ENCODE measurements at regions of chr15 and their contacts with region 1.

Region 1: DNA sequence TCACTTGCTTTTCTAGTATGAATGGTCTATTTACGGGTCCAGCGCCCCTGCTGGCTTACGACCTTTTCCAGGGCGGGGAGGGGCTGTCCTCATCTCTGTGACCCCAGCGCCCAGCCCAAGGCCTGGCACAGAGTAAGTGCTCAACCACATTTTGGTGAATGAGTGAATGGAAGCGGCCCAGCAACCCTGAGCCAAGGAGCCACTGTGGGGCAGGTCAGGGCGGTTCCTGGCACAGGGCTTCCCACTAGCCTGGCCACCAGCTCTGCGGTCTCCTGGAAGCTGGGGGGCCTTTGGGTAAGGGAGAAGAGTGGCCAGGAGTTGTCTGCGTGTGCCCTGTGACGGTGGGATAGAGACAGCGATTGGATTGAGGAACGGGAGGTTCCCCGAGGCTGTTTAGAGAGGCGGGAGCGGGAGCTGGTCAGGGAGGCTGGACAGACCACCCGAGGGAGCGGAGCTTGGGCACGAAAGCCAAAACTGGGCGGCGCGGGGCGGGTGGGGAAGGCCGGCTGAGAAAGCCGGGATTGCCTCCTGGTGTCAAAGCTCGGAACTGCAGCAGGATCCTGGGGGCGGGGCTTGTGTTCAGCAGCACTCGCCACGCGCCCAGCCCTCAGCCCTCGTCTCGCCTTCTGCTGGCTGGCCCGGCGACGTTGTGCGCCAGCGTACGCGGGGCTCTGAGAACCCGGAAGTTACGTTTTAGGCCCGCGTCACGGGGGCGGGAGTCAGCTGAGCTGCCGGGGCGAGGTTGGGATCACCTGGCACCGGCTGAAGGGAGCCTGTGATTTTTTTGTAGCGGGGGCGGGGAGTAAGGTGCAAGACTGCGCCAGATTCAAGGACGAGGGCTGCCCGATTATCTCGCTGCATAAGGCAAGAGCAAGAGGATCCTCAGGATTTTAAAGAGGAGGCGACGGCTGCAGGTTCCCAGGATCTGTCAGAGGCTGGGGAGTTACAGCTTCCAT is at the start of gene VPS18:
- DNase-seq: peak; percentile 99
- H3K4me3 Mint-ChIP-seq: peak within 1 kb of the TSS; percentile 97
- H3K27ac Mint-ChIP-seq: peak within 1 kb of the TSS; percentile 93
- H3K4me1 Mint-ChIP-seq: peaks cover 36% of the 10 kb centered on the region
- H3K27me3 Mint-ChIP-seq: peaks cover 4% of the 10 kb centered on the region
- total RNA-seq, gene VPS18: 16.3 to 17.1 TPM

Region 2: GRCh38 chr15:40684381-40684780 is 209.6 kb before region 1 on chr15:
- CTCF ChIA-PET with region 1: interaction called, 14 read pairs
- POLR2A ChIA-PET with region 1: no interaction called
- DNase-seq: no peak
- H3K4me3 Mint-ChIP-seq: no peak overlapping the region
- H3K27ac Mint-ChIP-seq: no peak overlapping the region
- H3K4me1 Mint-ChIP-seq: peaks cover 2% of the 10 kb centered on the region
- H3K27me3 Mint-ChIP-seq: peaks cover 2% of the 10 kb centered on the region

Region 3: DNA sequence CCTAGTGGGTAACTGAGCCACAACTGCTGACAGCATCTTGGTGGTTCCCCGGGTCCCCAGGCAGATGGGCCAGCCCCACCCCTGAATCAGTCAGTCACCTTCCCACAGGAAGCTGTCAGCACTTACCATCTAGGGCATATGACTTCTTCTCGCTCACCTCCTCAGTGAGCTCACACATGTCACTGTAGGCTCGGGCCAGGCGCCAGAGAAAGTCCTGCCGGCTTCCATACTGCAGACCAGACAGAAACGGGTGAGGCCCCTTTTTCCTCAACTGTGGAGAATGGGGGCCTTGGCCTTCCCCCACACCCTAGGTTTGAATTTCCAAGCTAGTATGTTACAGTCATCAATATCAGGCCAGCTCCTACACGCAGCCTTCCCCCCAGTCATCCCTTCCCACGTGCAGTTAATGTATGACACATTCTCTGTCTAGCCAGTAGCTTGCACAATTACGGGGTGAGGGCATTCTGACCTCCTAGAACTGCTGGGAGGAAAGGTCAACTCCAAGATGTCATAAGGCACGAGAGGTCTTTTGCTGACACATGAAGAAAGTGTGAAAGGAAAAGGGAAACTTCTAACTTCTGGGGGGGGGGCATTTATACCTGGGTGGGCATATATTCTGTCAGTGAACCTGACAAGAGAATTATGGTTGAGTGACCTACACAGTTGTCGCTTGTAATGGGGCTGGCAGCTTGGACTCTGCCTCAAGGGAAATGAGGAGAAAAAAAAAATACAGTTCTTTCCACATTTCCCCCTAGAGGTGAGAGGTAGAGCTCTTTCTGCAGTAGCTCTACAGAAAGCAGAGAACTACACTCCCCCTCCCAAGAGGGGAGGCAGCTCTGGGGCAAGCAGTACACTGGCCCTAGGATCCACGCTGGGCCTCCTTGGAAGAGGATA is 149.8 kb before region 1 on chr15:
- CTCF ChIA-PET with region 1: interaction called, 10 read pairs
- POLR2A ChIA-PET with region 1: no interaction called
- DNase-seq: peak; percentile 85
- H3K4me3 Mint-ChIP-seq: peak overlapping the region; percentile 53
- H3K27ac Mint-ChIP-seq: peak overlapping the region; percentile 95
- H3K4me1 Mint-ChIP-seq: peaks cover 48% of the 10 kb centered on the region
- H3K27me3 Mint-ChIP-seq: no peaks in the 10 kb centered on the region

Region 4: GRCh38 chr15:40807028-40807887 is 86.8 kb before region 1 on chr15 and contains the starts of genes DNAJC17 and ZFYVE19:
- CTCF ChIA-PET with region 1: interaction called, 16 read pairs
- POLR2A ChIA-PET with region 1: interaction called, 6 read pairs
- DNase-seq: peak; percentile 96
- H3K4me3 Mint-ChIP-seq: peak within 1 kb of the TSS; percentile 91
- H3K27ac Mint-ChIP-seq: peak within 1 kb of the TSS; percentile 95
- H3K4me1 Mint-ChIP-seq: peaks cover 25% of the 10 kb centered on the region
- H3K27me3 Mint-ChIP-seq: no peaks in the 10 kb centered on the region
- total RNA-seq, gene DNAJC17: 35.8 to 37.8 TPM
- total RNA-seq, gene ZFYVE19: 27.2 to 29.8 TPM

Region 5: DNA sequence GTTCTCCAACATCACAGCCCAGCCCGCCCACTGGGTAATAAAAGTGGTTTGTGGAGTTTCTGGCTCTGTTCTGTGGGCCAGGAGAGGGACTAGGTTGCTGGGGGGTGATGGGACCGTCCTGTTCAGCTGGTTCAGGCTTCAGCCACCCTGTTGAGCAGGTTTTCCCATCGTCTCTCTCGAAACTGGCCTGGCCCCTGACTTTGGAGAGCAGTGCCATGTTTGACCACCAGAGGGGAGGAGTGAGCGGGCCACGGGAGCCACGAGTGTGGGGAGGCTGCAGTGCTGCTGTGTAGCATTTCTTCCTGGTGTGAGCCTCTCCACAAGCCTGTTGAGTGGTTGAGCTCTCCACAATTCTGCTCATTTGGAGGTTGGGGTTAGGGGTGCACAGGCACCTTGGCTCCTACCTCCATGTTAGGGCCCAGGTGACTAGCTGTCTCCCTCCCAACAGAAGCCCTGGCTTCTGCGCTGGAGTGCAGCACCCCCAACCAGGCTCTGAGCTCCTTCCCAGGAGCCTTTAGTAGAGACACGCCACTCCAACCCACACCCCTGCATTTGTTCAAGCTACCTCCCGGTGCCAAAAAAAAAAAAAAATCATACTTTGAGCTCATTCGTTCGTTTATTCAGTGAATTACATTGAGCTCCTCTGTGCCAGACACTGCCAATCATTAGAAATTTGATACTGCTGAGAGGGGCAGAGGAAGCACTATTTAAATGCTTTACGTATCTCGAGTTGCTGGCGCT is 36.2 kb before region 1 on chr15:
- CTCF ChIA-PET with region 1: interaction called, 216 read pairs
- POLR2A ChIA-PET with region 1: interaction called, 51 read pairs
- DNase-seq: peak; percentile 84
- H3K4me3 Mint-ChIP-seq: no peak overlapping the region
- H3K27ac Mint-ChIP-seq: no peak overlapping the region
- H3K4me1 Mint-ChIP-seq: peaks cover 18% of the 10 kb centered on the region
- H3K27me3 Mint-ChIP-seq: no peaks in the 10 kb centered on the region

Region 6: DNA sequence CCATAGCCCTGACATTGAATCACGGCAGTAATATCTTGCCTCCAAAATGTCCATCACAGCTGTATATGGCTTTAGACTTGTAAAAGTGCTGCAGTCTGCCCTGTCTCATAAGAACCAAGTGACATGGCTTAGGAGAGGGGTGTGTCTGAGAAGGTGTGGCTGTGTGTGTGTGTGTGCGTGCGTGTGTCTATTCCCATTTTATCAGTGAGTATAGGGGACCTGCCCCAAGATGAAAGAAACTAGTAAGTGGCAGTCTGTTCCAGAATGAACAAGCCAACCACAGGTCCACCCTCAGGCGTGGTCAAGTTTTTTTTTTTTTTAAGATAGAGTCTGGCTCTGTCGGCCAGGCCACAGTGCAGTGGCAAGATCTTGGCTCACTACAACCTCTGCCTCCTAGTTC is 14.4 kb before region 1 on chr15:
- CTCF ChIA-PET with region 1: interaction called, 41 read pairs
- POLR2A ChIA-PET with region 1: interaction called, 7 read pairs
- DNase-seq: no peak
- H3K4me3 Mint-ChIP-seq: no peak overlapping the region
- H3K27ac Mint-ChIP-seq: no peak overlapping the region
- H3K4me1 Mint-ChIP-seq: peaks cover 14% of the 10 kb centered on the region
- H3K27me3 Mint-ChIP-seq: peaks cover 10% of the 10 kb centered on the region

Region 7: DNA sequence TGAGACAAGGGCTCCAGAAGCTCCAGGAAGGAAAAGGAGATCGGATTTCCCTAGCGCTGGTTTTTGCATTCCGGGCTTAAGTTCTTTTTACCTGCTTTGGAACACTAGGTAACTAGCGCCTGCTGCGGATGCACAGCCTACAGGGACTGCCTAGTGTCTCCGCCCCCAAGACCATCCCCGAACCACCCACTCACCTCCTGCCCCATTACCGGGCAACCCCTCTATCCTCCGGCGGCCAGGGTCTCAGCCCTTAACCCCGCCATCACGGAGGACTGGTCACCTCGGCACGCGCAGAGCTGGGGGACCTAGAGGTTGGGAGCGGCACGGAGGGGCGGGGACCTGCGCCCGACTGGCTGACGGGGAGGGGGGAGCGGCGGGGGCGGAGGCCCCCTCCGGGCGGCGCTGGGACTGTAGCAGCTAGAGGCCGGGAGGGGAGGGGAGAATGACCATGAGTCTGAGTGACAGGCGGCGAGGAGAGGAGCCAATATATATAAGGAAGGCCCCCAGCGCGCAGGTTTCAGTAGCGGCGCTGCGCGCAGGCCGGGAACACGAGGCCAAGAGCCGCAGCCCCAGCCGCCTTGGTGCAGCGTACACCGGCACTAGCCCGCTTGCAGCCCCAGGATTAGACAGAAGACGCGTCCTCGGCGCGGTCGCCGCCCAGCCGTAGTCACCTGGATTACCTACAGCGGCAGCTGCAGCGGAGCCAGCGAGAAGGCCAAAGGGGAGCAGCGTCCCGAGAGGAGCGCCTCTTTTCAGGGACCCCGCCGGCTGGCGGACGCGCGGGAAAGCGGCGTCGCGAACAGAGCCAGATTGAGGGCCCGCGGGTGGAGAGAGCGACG is 35.0 kb after region 1 on chr15 and contains the start of gene DLL4:
- CTCF ChIA-PET with region 1: interaction called, 16 read pairs
- POLR2A ChIA-PET with region 1: interaction called, 8 read pairs
- DNase-seq: peak; percentile 42
- H3K4me3 Mint-ChIP-seq: peak within 1 kb of the TSS; percentile 50
- H3K27ac Mint-ChIP-seq: no peak within 1 kb of the TSS
- H3K4me1 Mint-ChIP-seq: peaks cover 47% of the 10 kb centered on the region
- H3K27me3 Mint-ChIP-seq: peaks cover 75% of the 10 kb centered on the region
- total RNA-seq, gene DLL4: not detected

Measured in activated CD4-positive, alpha-beta memory T cell treated with anti-CD3 and anti-CD28 coated beads, Interleukin-2, amount 10 ng/mL, durations not matched to agents 7 days and 5 days (primary cell).